Mammary epithelial cell (primary cell): ENCODE measurements at regions of chr2 and their contacts with region 1.

Region 1: DNA sequence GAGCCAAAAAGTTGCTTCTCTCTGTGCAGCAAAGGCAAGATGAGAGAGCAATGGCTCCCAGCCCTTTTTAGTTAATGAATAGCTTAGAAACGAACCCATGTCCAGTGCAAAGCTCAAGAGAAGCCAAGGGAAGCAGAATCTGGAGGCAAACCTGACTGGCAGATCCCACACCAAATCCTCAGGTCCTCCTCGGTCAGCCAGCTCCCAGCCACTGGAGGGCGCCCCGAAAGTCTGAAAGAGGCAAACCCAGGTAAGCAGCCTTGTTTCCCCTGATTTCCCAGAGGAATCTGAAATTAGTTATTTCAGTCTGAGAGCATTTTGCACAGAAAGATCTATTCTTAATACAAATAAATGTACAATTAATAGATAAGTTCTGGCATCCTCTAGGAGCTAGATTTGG is 71.3 kb upstream of the PID1 start:
- DNase-seq: peak; percentile 55
- H3K4me3 ChIP-seq: no peak overlapping the region
- H3K27ac ChIP-seq: no peak overlapping the region
- H3K4me1 ChIP-seq: peaks cover 12% of the 10 kb centered on the region
- H3K27me3 ChIP-seq: no peaks in the 10 kb centered on the region
- CTCF ChIP-seq: peak; percentile 69 to 73

Region 2: GRCh38 chr2:229431327-229431954 is 89.1 kb after region 1 on chr2:
- CTCF ChIA-PET with region 1: no interaction called
- dilution Hi-C with region 1: loop called (anchors 5 kb)
- in situ Hi-C with region 1: no loop called
- intact Hi-C with region 1: loop called (anchors 2 kb)
- DNase-seq: peak; percentile 56
- H3K4me3 ChIP-seq: no peak overlapping the region
- H3K27ac ChIP-seq: no peak overlapping the region
- H3K4me1 ChIP-seq: no peaks in the 10 kb centered on the region
- H3K27me3 ChIP-seq: no peaks in the 10 kb centered on the region
- CTCF ChIP-seq: peak; percentile 51 to 64

Region 3: DNA sequence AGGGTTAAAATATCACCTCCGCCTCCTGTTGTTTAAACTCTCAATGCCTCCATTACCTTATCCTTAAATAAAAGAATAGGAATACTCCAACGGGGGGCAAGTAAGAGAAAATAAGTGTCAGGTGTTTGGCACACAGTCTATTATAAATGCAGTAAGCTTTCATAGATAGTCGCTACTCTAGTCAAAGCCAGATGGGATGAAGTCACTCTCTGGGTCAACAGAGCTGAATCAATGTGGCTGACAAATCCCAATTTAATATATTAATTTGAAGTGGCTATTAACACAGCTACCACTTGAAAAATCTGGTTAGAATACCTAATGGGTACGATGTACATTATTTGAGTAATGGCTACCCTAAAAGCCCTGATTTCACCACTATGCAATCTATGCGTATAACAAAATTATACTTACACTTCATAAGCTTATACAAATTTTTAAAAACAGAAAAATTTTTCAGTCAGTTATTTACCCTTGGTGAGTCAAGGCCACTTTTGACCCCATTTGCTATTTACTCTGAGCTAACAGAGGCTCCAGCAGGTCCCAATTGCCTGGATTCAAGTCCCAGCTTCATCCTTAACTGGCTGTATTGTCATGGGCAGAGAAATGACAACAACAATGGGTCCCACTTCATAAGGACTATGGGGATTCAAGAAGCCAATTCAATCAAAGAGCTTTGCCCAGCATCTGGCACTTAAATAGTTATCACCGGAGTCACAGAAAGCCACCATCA is 96.2 kb after region 1 on chr2:
- CTCF ChIA-PET with region 1: no interaction called
- dilution Hi-C with region 1: loop called (anchors 5 kb)
- in situ Hi-C with region 1: no loop called
- intact Hi-C with region 1: no loop called
- DNase-seq: no peak
- H3K4me3 ChIP-seq: no peak overlapping the region
- H3K27ac ChIP-seq: no peak overlapping the region
- H3K4me1 ChIP-seq: no peaks in the 10 kb centered on the region
- H3K27me3 ChIP-seq: no peaks in the 10 kb centered on the region
- CTCF ChIP-seq: no peak

Region 4: GRCh38 chr2:229653531-229653930 is 311.2 kb after region 1 on chr2:
- CTCF ChIA-PET with region 1: no interaction called
- dilution Hi-C with region 1: no loop called
- in situ Hi-C with region 1: no loop called
- intact Hi-C with region 1: no loop called
- DNase-seq: no peak
- H3K4me3 ChIP-seq: no peak overlapping the region
- H3K27ac ChIP-seq: no peak overlapping the region
- H3K4me1 ChIP-seq: no peaks in the 10 kb centered on the region
- H3K27me3 ChIP-seq: no peaks in the 10 kb centered on the region
- CTCF ChIP-seq: no peak